Activated CD4-positive, alpha-beta T cell treated with anti-CD3 and anti-CD28 coated beads for 36 hours (primary cell): ENCODE measurements at regions of chr6 and their contacts with region 1.

Region 1: GRCh38 chr6:33744001-33744848 is 2.5 kb downstream of the IP6K3 start:
- DNase-seq: peak; percentile 85
- ATAC-seq: peak; percentile 89
- H3K4me3 Mint-ChIP-seq: no peak overlapping the region
- H3K27ac Mint-ChIP-seq: no peak overlapping the region
- H3K4me1 Mint-ChIP-seq: no peaks in the 10 kb centered on the region
- H3K27me3 Mint-ChIP-seq: no peaks in the 10 kb centered on the region

Region 2: GRCh38 chr6:33481189-33481588 is 263.0 kb before region 1 on chr6:
- CTCF ChIA-PET with region 1: no interaction called
- POLR2A ChIA-PET with region 1: no interaction called
- intact Hi-C with region 1: no loop called
- DNase-seq: no peak
- ATAC-seq: no peak
- H3K4me3 Mint-ChIP-seq: no peak overlapping the region
- H3K27ac Mint-ChIP-seq: no peak overlapping the region
- H3K4me1 Mint-ChIP-seq: no peaks in the 10 kb centered on the region
- H3K27me3 Mint-ChIP-seq: no peaks in the 10 kb centered on the region

Region 3: DNA sequence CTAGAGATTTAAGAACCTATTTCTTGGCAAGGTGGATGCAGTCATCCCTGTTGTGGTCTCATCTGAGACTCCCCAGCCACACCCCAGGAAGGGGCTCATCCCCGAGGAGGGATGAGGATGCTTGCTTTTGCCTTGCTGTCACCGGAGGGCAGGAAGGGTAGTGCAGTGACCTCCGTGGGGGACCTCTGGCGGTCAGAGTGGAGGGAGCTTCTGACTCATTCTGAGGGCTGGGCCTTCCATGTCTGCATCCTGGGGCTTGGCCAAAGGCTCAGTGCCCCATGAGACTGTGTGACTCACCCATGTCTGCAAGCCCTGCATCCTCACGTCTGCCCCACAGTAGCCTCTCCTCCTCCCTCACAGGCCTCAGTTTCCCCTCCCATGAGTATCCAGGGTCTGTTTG is 71.4 kb before region 1 on chr6:
- CTCF ChIA-PET with region 1: no interaction called
- POLR2A ChIA-PET with region 1: no interaction called
- intact Hi-C with region 1: no loop called
- DNase-seq: no peak
- ATAC-seq: no peak
- H3K4me3 Mint-ChIP-seq: no peak overlapping the region
- H3K27ac Mint-ChIP-seq: no peak overlapping the region
- H3K4me1 Mint-ChIP-seq: peaks cover 16% of the 10 kb centered on the region
- H3K27me3 Mint-ChIP-seq: no peaks in the 10 kb centered on the region

Region 4: GRCh38 chr6:33761922-33762629 is 17.9 kb after region 1 on chr6:
- CTCF ChIA-PET with region 1: no interaction called
- POLR2A ChIA-PET with region 1: no interaction called
- intact Hi-C with region 1: loop called in 1 of 2 experiments (anchors 1 kb)
- DNase-seq: peak; percentile 75
- ATAC-seq: peak; percentile 85
- H3K4me3 Mint-ChIP-seq: no peak overlapping the region
- H3K27ac Mint-ChIP-seq: no peak overlapping the region
- H3K4me1 Mint-ChIP-seq: no peaks in the 10 kb centered on the region
- H3K27me3 Mint-ChIP-seq: no peaks in the 10 kb centered on the region

Region 5: GRCh38 chr6:33771146-33772081 is 27.2 kb after region 1 on chr6:
- CTCF ChIA-PET with region 1: interaction called, 24 read pairs
- POLR2A ChIA-PET with region 1: no interaction called
- intact Hi-C with region 1: no loop called
- DNase-seq: peak; percentile 82
- ATAC-seq: peak; percentile 76
- H3K4me3 Mint-ChIP-seq: no peak overlapping the region
- H3K27ac Mint-ChIP-seq: no peak overlapping the region
- H3K4me1 Mint-ChIP-seq: peaks cover 2% of the 10 kb centered on the region
- H3K27me3 Mint-ChIP-seq: no peaks in the 10 kb centered on the region